ENCODE measurements at regions of chr1 and their contacts with region 1.

Region 1: DNA sequence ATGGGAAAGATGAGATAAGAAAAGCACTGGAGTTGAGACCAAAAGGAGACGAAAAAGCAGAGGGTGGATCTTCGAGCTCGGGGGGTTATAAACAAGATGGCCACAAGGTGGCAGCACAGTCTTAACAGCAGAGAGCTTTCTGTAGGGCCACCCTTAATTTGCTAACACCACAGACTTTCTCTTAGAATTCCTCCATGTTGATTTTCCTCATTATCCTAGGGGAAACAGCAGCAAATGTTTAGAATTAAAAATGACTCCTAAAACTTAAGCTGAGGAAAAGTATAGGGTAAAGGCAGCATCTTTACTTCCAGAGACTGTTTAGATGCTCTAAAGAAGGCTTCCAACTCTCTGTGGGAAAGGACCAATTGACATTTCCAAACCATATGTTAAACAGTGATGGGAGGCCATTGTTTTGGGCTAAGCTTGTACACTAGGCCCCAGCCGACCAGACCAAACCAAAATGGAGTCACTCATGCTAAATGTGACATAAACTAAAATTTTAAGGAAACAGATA is 2.5 kb upstream of the APOBEC4 start:
- DNase-seq: peak; percentile 61
- ATAC-seq: peak; percentile 66
- H3K4me3 ChIP-seq: no peak overlapping the region
- H3K27ac ChIP-seq: no peak overlapping the region
- H3K4me1 ChIP-seq: peaks cover 31% of the 10 kb centered on the region
- H3K27me3 ChIP-seq: no peaks in the 10 kb centered on the region
- CTCF ChIP-seq: peak; percentile 80 to 88 (median 80); a peak in 5 of 6 replicates
- EP300 ChIP-seq: no peak
- POLR2A ChIP-seq: no peak
- RAD21 ChIP-seq: peak; percentile 92

Region 2: DNA sequence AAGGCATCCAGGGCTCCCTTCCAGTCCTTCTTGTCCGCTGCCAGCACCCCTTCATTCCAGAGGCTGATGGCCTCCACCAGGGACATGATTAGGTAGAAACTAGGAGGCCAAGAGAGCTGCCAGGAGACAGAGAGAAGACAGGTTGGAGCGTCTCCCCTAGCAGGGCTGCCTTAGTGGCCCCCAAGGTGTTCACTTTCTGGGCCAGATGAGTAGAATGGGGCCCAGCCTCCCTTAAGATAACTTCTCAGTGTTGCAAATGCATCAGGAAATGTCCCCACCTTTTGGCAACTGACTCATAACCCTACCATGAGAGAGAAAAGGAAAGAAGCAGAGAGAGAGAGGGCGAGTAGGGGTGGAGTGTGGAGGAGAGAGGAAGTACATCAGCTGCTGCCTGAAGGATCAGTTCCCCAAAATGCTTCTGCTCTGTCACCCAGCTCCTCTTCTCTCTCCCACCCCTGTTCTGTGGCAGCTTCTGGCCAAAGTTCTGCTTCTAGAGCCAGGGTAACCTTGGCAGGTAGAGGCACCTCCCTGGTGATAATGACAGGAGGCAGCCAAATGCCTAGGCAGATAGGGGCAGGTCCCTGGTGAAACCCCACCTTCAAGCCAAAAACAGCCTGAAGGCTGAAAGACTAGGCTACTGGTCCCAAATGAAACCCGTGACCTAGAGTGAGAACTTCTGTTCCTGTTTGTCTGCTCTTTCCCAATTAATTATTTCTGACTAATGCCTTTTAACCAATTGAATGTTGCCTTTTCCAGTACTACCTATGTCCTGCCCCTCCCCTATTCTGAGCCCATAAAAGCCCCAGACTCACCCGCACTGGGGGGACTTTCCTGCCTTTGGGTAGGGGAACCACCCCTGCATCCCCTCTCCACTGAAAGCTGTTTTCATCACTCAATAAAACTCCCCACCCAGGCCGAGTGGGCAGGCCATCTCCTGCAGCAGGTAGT is 65.1 kb before region 1 on chr1 and contains the start of gene NCF2:
- CTCF ChIA-PET with region 1: interaction called, 7 read pairs
- POLR2A ChIA-PET with region 1: interaction called, 3 read pairs
- RAD21 ChIA-PET with region 1: interaction called, 4 read pairs
- SMC1A ChIA-PET with region 1: interaction called, 15 read pairs
- in situ Hi-C with region 1: no loop called
- intact Hi-C with region 1: no loop called
- DNase-seq: peak; percentile 96
- ATAC-seq: peak; percentile 79
- H3K4me3 ChIP-seq: peak within 1 kb of the TSS; percentile 73
- H3K27ac ChIP-seq: peak within 1 kb of the TSS; percentile 95
- H3K4me1 ChIP-seq: peaks cover 48% of the 10 kb centered on the region
- H3K27me3 ChIP-seq: no peaks in the 10 kb centered on the region
- CTCF ChIP-seq: no peak
- EP300 ChIP-seq: peak; percentile 74 to 93
- POLR2A ChIP-seq: peak; percentile 64
- RAD21 ChIP-seq: peak; percentile 46; the same call in 1 of the 2 replicates
- polyA plus RNA-seq, gene NCF2: 31.4 to 61.2 TPM

Region 3: DNA sequence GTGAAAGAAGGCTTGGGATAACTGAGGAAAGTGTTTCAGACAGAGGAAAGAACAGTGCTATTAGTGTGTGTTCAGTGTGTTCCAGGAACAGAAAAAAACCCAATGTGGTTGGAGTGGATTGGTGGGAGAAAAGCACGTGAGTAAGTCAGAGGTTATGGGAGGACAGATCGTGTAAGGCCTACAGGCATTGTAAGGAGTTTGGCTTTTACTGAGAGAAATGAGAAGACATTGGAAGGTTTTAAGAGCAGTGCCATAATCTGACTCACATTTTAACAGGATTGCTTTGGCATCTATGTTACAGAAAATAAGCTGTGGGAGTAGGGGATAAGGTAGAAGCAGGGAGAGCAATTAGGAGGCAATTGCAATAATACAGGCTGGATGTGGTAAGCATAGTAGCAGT is 24.9 kb before region 1 on chr1:
- CTCF ChIA-PET with region 1: interaction called, 81 read pairs
- POLR2A ChIA-PET with region 1: interaction called, 8 read pairs
- RAD21 ChIA-PET with region 1: interaction called, 56 read pairs
- SMC1A ChIA-PET with region 1: interaction called, 70 read pairs
- in situ Hi-C with region 1: no loop called
- intact Hi-C with region 1: no loop called
- DNase-seq: no peak
- ATAC-seq: peak; percentile 10
- H3K4me3 ChIP-seq: peak overlapping the region; percentile 39; the same call in 1 of the 2 replicates
- H3K27ac ChIP-seq: no peak overlapping the region
- H3K4me1 ChIP-seq: no peaks in the 10 kb centered on the region; the same call in 1 of the 2 replicates
- H3K27me3 ChIP-seq: no peaks in the 10 kb centered on the region
- CTCF ChIP-seq: no peak
- EP300 ChIP-seq: no peak
- POLR2A ChIP-seq: no peak
- RAD21 ChIP-seq: no peak

Region 4: GRCh38 chr1:183676586-183677189 is 21.1 kb after region 1 on chr1:
- CTCF ChIA-PET with region 1: interaction called, 199 read pairs
- POLR2A ChIA-PET with region 1: interaction called, 4 read pairs
- RAD21 ChIA-PET with region 1: interaction called, 9 read pairs
- SMC1A ChIA-PET with region 1: interaction called, 34 read pairs
- in situ Hi-C with region 1: no loop called
- intact Hi-C with region 1: no loop called
- DNase-seq: no peak
- ATAC-seq: peak; percentile 31; the same call in 2 of the 3 replicates
- H3K4me3 ChIP-seq: no peak overlapping the region
- H3K27ac ChIP-seq: no peak overlapping the region
- H3K4me1 ChIP-seq: no peaks in the 10 kb centered on the region
- H3K27me3 ChIP-seq: no peaks in the 10 kb centered on the region
- CTCF ChIP-seq: no peak
- EP300 ChIP-seq: no peak
- POLR2A ChIP-seq: no peak
- RAD21 ChIP-seq: no peak

Region 5: DNA sequence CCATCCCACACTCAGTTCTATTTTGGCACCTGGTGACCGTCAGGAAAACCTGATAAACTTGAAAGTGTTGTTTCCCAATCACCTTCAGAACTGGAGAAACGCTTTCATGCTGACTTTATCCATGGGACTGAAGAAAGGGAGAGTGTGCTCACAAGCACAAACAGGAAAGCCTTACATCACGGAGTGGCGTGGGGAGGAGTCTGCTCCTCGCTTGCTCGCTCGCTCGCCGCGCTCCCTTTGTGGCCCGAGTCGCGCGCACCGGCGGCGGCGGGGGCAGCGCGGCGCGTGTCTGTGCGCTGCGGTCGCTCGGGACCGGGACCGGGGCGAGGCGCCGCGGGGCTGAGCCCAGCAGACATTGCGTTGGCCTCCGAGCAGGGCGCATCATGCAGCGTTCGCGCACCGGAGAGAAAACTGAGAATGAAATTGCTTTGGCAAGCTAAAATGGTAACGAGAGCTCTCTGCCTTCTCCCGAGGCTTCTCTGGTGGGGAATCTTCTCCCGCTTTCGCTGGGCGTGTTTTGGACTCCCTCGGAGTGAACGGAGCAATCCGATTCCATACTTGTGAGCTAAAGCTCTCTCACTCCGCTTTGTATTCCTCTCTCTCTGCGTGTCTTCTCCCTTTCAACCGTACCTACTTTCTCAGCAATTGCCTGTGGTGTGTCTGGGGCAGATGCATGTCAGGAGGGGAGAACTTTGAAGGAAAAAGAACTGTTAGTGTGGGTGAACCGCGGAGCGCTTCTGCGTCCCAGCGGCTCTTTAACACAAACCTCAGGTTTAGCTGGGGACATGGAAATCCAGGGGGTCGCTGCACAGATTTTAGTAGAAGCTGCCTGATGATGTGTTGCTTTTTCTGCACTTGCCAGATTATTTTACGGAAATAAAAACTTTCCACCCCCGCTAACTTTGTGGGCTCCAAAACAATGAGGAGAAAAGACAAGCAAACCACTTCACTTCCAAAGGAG is 149.5 kb after region 1 on chr1 and contains the start of gene RGL1:
- CTCF ChIA-PET with region 1: interaction called, 13 read pairs
- POLR2A ChIA-PET with region 1: no interaction called
- RAD21 ChIA-PET with region 1: interaction called, 9 read pairs
- SMC1A ChIA-PET with region 1: interaction called, 11 read pairs
- in situ Hi-C with region 1: no loop called
- intact Hi-C with region 1: loop called (anchors 2 kb)
- DNase-seq: no peak
- ATAC-seq: peak; percentile 72
- H3K4me3 ChIP-seq: peak within 1 kb of the TSS; percentile 90
- H3K27ac ChIP-seq: peak within 1 kb of the TSS; percentile 93
- H3K4me1 ChIP-seq: peaks cover 11% of the 10 kb centered on the region; the same call in 1 of the 2 replicates
- H3K27me3 ChIP-seq: no peaks in the 10 kb centered on the region
- CTCF ChIP-seq: no peak
- EP300 ChIP-seq: 0 out of 4 replicates have a peak, but pooled peaks of 1 of the 2 experiments have one; percentile 14
- POLR2A ChIP-seq: peak; percentile 81
- RAD21 ChIP-seq: no peak
- polyA plus RNA-seq, gene RGL1: 8.1 to 9.4 TPM

Region 6: GRCh38 chr1:183901748-183902330 is 246.2 kb after region 1 on chr1:
- CTCF ChIA-PET with region 1: interaction called, 26 read pairs
- POLR2A ChIA-PET with region 1: interaction called, 3 read pairs
- RAD21 ChIA-PET with region 1: interaction called, 19 read pairs
- SMC1A ChIA-PET with region 1: interaction called, 21 read pairs
- in situ Hi-C with region 1: no loop called
- intact Hi-C with region 1: no loop called
- DNase-seq: peak; percentile 56
- ATAC-seq: peak; percentile 55
- H3K4me3 ChIP-seq: no peak overlapping the region
- H3K27ac ChIP-seq: peak overlapping the region; percentile 88
- H3K4me1 ChIP-seq: peaks cover 53% of the 10 kb centered on the region
- H3K27me3 ChIP-seq: no peaks in the 10 kb centered on the region
- CTCF ChIP-seq: no peak
- EP300 ChIP-seq: peak; percentile 48 to 68; a peak in 3 of 4 replicates
- POLR2A ChIP-seq: no peak
- RAD21 ChIP-seq: no peak

Region 7: DNA sequence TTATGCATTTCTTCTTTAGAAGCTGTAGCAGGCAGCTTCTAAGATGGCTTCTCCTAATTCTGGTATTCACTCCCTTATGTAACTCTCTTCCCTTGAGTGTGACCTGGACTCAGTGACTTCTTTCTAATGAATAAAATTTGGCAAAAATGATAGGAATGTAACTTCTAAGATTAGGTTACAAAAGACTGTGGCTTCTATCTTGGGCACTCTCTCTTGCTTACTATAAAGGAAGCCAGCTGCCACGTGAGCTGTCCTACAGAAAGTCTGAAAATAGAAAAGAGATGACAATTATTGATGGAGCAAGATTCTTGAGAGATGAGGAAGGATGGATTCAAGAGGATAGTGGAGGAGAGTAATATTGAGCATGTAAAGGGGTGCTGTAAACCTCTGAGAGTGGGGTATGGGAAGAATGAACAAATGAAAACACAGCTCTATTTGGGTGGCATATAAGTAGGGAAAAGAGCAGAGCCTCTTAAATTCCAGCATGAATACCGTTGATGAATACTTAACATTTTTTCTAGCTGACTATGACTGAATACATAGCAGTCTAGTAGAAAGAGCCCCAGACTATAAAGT is 401.4 kb after region 1 on chr1:
- CTCF ChIA-PET with region 1: interaction called, 3 read pairs
- POLR2A ChIA-PET with region 1: no interaction called
- RAD21 ChIA-PET with region 1: interaction called, 4 read pairs
- SMC1A ChIA-PET with region 1: no interaction called
- in situ Hi-C with region 1: no loop called
- intact Hi-C with region 1: loop called (anchors 5 kb)
- DNase-seq: no peak
- ATAC-seq: no peak
- H3K4me3 ChIP-seq: no peak overlapping the region
- H3K27ac ChIP-seq: no peak overlapping the region
- H3K4me1 ChIP-seq: peaks cover 7% of the 10 kb centered on the region; the same call in 1 of the 2 replicates
- H3K27me3 ChIP-seq: no peaks in the 10 kb centered on the region
- CTCF ChIP-seq: no peak
- EP300 ChIP-seq: no peak
- POLR2A ChIP-seq: no peak
- RAD21 ChIP-seq: no peak